Prostate gland (tissue), 2 donors: ENCODE measurements at regions of chr3 and their contacts with region 1.

Region 1: DNA sequence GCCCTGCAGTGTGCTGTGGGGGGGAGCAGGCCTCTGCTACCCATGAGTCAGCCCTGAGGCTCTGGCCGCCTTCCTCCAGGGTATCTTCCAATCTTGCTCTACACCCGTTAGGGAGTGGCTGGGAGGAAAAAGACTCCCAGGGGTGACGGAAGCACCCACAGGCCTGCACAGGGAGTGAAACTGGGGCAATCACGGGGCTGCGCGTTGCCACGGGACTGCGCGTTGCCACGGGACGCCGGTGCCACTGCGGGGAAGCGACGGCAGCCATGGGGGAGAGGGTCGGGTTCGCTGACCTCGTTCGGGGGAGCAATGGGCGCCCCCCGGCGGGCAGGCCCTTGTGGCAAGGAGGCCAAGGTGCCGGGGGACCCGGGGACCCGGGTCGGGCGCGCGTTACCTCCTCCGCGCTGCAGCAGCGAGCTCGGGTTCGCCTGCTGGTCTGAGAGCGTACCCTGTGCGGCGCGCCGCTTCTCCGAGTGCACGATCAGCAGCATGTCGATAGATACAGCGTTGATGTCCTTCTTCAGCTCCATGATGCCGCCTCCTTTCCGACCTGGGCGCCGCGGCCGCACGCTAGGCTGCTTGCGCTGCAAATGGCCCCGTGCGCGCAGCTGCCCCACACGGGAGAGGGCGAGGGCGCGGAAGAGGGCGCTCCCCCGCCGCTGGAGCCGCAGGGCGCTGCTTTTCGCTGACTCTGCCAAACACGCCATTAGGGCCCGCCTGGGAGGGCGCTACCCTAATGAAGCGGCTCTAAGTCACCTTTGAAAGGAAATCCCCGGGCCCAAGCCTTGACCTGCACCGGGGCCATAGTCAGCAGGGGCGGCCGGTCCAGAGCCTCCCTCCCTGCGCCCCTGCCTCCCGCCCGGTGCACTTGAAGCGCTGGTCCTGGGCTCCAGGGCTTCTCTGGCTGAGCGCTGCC is at the start of gene KY:
- DNase-seq: peak; percentile 18
- H3K4me3 ChIP-seq: peak within 1 kb of the TSS; percentile 27 to 30
- H3K27ac ChIP-seq: peak within 1 kb of the TSS; percentile 51 to 67
- H3K4me1 ChIP-seq: no peaks in the 10 kb centered on the region
- H3K27me3 ChIP-seq: no peaks in the 10 kb centered on the region
- CTCF ChIP-seq: no peak
- POLR2A ChIP-seq: no peak
- total RNA-seq, gene KY: 1.4 to 1.7 TPM

Region 2: DNA sequence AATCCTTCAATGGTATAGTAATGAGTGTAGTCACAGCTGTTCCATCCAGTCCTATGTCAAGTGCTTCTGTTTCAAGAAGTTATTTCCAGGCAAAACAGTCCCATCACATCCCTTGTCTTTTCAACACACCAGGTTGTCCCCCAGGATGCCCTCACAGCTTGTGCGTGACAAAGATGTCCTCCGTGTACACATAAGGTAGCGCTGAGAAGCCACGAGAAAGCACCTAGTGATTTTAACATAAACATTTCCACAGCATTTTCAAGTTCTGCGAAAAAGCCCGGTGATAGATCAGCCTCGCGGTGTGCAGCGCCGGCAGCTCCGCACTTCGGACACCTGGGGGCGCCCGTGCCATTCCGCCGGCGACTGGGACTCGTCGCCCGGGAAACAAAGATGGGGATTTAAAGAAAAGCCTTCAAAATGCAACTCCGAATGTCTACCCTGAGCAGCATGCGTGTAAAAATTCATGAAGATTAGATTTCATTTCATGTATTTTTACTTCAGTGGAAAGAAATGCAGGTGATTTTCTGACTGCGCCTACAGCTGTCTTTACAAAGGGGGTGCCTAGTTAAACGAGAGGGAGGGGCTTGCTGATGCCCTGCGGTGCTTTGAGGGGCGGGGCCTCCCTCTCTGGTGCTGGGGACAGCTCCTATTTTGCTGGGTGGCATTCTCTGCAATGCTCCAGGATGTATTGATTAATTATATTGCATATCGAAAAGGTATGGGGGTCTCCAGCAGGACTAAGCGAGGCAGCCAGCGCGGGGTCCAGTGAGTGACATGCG is 49.8 kb before region 1 on chr3:
- intact Hi-C with region 1: no loop called
- DNase-seq: peak; percentile 27
- H3K4me3 ChIP-seq: no peak overlapping the region
- H3K27ac ChIP-seq: no peak overlapping the region
- H3K4me1 ChIP-seq: no peaks in the 10 kb centered on the region
- H3K27me3 ChIP-seq: no peaks in the 10 kb centered on the region
- CTCF ChIP-seq: peak; percentile 64 to 82 (median 74)
- POLR2A ChIP-seq: no peak

Region 3: DNA sequence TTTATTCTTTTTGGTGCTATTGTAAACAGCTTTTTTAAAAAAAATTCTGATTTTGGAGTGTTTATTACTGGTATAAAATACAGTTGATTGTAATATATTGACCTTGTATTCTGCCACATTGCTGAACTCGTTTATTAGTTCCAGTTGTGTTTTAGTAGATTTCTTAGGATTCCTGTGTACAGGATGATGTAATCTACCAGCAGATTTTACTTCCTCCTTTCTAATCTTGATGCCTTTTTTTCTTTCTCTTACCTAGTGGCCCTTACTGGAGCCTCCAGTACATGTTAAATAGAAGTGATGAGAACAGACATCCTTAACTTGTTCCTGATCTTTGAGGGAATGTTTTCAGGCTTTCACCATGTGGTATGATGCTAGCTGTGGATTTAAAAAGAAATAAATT is 70.5 kb after region 1 on chr3:
- intact Hi-C with region 1: loop called (anchors 10 kb)
- DNase-seq: no peak
- H3K4me3 ChIP-seq: no peak overlapping the region
- H3K27ac ChIP-seq: no peak overlapping the region
- H3K4me1 ChIP-seq: no peaks in the 10 kb centered on the region
- H3K27me3 ChIP-seq: no peaks in the 10 kb centered on the region
- CTCF ChIP-seq: no peak
- POLR2A ChIP-seq: no peak

Region 4: GRCh38 chr3:134754768-134755559 is 104.3 kb after region 1 on chr3:
- intact Hi-C with region 1: loop called (anchors 2 kb)
- DNase-seq: peak; percentile 8
- H3K4me3 ChIP-seq: no peak overlapping the region
- H3K27ac ChIP-seq: no peak overlapping the region
- H3K4me1 ChIP-seq: no peaks in the 10 kb centered on the region
- H3K27me3 ChIP-seq: no peaks in the 10 kb centered on the region
- CTCF ChIP-seq: peak in 2 of 4 experiments; percentile 39 to 41
- POLR2A ChIP-seq: no peak